ENCODE measurements at regions of chr3 and their contacts with region 1.

Region 1: DNA sequence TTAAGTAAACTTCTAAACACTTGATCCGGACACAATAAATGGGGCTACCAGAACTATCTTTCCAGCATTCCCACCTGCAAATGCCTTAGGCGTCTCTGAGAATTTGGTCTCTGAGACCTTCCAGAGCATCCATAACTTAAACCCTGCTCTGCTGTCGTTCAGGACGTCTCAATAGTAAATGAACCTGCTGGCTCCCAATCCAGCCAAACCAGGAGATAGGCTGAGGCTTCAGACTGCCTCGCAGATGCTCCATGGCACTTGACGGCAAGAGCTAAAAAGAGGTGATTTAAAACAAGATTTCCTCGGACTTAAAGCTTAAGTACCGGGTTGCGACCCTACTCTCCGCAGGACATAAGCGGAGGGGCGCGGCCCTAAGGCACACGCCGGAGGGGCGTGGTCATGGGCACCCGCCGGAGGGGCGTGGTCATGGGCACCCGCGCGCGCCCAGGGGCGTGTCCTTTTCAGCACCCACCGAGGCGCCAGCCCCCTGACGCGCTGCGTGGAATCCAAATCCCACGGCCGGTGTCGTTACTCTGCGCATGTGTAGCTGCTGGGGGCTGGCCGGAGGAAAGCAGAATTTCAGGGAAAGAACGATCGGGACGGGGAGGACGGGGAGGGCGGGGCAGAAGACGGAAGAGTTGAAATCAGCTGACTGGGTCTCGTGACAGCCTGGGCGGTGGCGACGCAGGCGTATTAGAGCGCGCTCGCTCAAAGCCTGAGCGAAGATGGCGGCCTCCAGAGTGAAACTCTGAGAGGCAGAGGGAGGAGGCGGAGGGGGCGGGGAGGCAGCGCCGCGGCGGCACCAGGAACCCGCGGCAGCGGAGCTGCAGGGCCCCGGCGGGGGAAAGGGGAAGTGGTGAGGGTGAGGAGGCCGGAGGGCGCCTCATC is at the start of gene DNAJC13:
- DNase-seq: peak; percentile 90
- H3K4me3 Mint-ChIP-seq: peak within 1 kb of the TSS; percentile 100
- H3K27ac Mint-ChIP-seq: peak within 1 kb of the TSS; percentile 98
- H3K4me1 Mint-ChIP-seq: peaks cover 31% of the 10 kb centered on the region
- H3K27me3 Mint-ChIP-seq: no peaks in the 10 kb centered on the region
- total RNA-seq, gene DNAJC13: 30.2 and 34.0 TPM in 2 replicates

Region 2: GRCh38 chr3:131381444-131382291 is 1035.4 kb before region 1 on chr3 and contains the start of gene NUDT16:
- intact Hi-C with region 1: loop called (anchors 5 kb)
- DNase-seq: peak; percentile 98
- H3K4me3 Mint-ChIP-seq: peak within 1 kb of the TSS; percentile 92
- H3K27ac Mint-ChIP-seq: peak within 1 kb of the TSS; percentile 90
- H3K4me1 Mint-ChIP-seq: peaks cover 52% of the 10 kb centered on the region
- H3K27me3 Mint-ChIP-seq: no peaks in the 10 kb centered on the region
- total RNA-seq, gene NUDT16: 10.6 and 11.5 TPM in 2 replicates

Region 3: DNA sequence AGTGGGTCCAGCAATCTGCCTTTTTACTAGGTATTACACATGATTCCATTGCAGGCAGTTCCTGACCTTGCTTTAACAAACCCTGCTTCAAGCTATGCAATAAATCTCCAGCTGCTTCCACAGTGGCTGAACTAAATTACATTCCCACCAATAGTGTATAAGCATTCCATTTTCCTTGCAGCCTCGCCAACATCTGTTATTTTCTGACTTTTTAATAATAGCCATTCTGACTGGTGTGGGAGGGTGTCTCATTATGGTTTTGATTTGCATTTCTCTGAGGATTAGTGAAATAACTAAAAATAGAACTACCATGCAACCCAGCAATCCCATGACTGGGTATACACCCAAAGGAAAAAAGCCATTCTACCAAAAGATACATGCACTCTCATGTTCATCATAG is 36.1 kb before region 1 on chr3:
- intact Hi-C with region 1: no loop called
- DNase-seq: no peak
- H3K4me3 Mint-ChIP-seq: no peak overlapping the region
- H3K27ac Mint-ChIP-seq: no peak overlapping the region
- H3K4me1 Mint-ChIP-seq: no peaks in the 10 kb centered on the region
- H3K27me3 Mint-ChIP-seq: peaks cover 3% of the 10 kb centered on the region

Region 4: DNA sequence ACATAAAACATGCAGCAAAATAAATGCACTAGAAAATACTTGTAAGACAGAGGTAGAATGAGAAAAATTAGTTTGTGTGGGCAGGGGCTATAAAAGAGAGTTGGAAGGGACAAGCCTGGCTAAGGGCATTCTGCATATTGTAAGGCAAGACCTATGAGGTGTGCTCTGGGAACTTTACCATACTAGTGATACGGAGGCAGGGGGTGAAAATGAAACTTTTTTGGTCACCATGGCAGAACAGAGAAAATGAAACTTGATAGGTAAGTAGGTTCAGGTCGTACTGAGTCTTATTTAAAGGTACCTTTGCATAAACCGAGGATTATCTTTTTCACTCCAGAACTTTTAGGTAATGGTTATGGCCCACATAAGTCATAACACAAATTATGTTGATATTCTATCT is 105.3 kb after region 1 on chr3:
- intact Hi-C with region 1: loop called (anchors 5 kb)
- DNase-seq: no peak
- H3K4me3 Mint-ChIP-seq: peak overlapping the region; percentile 41
- H3K27ac Mint-ChIP-seq: peak overlapping the region; percentile 46
- H3K4me1 Mint-ChIP-seq: peaks cover 39% of the 10 kb centered on the region
- H3K27me3 Mint-ChIP-seq: no peaks in the 10 kb centered on the region

Region 5: DNA sequence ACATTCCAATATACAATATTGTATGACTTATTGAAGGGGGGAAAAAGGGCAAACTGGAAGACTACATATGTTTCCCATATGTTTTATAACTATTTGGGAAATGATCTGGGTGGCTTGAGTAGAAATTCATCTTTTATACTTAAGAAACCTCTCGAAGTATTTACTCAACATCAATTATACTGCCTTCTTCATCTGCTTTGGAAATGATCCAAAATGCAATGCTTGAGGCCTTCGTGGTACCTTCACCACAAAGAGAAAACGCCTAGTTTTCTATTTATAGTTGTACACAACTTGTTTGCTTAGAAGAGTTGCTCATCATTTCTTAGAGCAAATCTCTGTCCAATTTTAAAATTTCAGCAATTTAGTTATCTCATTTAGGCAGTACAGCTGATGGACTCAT is 198.8 kb after region 1 on chr3:
- intact Hi-C with region 1: no loop called
- DNase-seq: no peak
- H3K4me3 Mint-ChIP-seq: no peak overlapping the region
- H3K27ac Mint-ChIP-seq: no peak overlapping the region
- H3K4me1 Mint-ChIP-seq: no peaks in the 10 kb centered on the region
- H3K27me3 Mint-ChIP-seq: no peaks in the 10 kb centered on the region

Region 6: DNA sequence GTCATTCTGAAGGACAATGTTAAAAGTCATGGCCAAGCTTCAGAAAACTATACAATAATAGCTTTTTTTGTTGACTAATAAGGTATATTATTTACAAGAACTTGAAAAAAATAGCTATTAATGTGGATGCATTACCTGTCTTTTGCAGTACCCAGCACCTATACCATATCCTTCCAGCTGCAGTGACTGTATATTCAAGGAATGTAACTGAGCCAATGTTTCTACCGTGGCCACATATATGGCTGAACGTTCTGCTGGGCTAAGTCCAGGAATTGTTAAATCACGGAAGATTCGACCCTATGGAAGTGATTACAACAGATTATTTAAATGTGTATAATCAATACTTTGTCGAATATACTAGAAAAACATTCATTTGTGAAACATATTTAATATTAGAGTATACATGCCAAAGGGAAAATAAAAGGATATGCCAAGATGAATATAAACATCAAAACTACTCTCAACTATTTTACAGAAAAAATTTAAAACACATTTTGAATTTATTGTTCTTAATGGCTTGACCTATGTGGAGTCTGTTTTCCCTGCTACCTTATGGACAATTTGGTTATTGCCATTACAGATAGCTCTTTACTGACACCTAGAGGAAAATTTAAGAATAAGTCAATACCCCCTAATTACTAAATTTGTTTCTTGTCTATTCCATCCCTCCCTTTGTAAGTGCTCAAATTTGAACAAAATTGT is 224.9 kb after region 1 on chr3:
- intact Hi-C with region 1: loop called (anchors 5 kb)
- DNase-seq: no peak
- H3K4me3 Mint-ChIP-seq: no peak overlapping the region
- H3K27ac Mint-ChIP-seq: no peak overlapping the region
- H3K4me1 Mint-ChIP-seq: peaks cover 4% of the 10 kb centered on the region
- H3K27me3 Mint-ChIP-seq: no peaks in the 10 kb centered on the region

Region 7: DNA sequence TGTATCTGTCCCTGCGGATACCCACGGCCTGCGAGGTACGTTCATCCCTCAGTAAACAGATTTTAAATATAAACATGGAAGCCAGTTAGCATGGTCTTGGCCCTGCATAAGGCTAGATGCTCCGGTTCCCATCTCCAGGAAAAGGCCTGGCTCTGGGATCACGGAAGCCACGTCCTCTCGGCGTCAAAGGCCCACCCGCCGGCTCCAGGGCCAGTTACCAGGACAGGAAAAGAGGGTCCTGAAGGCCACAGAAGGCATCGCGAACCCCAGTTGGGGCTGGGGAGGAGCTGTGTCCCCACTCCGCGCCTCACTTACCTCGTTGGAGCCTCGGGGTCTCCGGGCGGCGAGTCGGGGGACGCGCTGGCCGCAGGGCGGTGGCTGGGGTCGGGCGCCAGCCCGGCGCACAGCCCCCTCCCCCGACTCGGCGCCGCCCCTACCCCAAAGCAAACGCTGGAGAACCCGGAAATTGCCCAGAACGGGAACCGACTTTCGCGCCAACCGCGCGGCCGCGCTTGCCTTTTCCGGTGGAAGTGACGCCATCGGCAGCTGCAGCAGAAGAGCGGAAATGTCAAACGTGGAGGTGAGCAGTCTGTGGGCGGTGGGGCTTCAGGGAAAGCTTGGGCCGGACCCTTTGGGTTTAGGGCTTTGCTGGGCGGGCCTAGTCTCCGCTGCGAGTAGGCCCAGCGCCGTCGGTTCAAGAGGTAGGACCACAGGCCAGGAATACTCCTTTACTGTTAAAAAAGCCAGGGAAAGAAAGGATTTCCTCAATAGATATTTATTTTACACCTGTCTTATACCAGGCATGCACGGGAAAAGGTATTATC is 1244.6 kb after region 1 on chr3 and contains the start of gene TOPBP1:
- intact Hi-C with region 1: loop called (anchors 5 kb)
- DNase-seq: peak; percentile 90
- H3K4me3 Mint-ChIP-seq: peak within 1 kb of the TSS; percentile 99
- H3K27ac Mint-ChIP-seq: peak within 1 kb of the TSS; percentile 99
- H3K4me1 Mint-ChIP-seq: peaks cover 47% of the 10 kb centered on the region
- H3K27me3 Mint-ChIP-seq: peaks cover 2% of the 10 kb centered on the region
- total RNA-seq, gene TOPBP1: 88.5 and 94.1 TPM in 2 replicates

Measured in activated T-helper 1 cell treated with anti-CD3 and anti-CD28 coated beads, Interleukin-12 subunit alpha, Interleukin-12 subunit beta, Interleukin-2, Interleukin-4 antibody, amounts not matched to agents 30 ng/mL and 10 ng/mL and 1 ng/mL, durations not matched to agents 14 hours and 24 hours and 36 hours (primary cell).